ENCODE measurements at regions of chr1 and their contacts with region 1.

Region 1: GRCh38 chr1:101238681-101239094 is 1.9 kb downstream of the S1PR1 start:
- DNase-seq: peak; percentile 97
- H3K4me3 Mint-ChIP-seq: peak overlapping the region; percentile 99
- H3K27ac Mint-ChIP-seq: peak overlapping the region; percentile 99
- H3K4me1 Mint-ChIP-seq: peaks cover 44% of the 10 kb centered on the region
- H3K27me3 Mint-ChIP-seq: no peaks in the 10 kb centered on the region

Region 2: DNA sequence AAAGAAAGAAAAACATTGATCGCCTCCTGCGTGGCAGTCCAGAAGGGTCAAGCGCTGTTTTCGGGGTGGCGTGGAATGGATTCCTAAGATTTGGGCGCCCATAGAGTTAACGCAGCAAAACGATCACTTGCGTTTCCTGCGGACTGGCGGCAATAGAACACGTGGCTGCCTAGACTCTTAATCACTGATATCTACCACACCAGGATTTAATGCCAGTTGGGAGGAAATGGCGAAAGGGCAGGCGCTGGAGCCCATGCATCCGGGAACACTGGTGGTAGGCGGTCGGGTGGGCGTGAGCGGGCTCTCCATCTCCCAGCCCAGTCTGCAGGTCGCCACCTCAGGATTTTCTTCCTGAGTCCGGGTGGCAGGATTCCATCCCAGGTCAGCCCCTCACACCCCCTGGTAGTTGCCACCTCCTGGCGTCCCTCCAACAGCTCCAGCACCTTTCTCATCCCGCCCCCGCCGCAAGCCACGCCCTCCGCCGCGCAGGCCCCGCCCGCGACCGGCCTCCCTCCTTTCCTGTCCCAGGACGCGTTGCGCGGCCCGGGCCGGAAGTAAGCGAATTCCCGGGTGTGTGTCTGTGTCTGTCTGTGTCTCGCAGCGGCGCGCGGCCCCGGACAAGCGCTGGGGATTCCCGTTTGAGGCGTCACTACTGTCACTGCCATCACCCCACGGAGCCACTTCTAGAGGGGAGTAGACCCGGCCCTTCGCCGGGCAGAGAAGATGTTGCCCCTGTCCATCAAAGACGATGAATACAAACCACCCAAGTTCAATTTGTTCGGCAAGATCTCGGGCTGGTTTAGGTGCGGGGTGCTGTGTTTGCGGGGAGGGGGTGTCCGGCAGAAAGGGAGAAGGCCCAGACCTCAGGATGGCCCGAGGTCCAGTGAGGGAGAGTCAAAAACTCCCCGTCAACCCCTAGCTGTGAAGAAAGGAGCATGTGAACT is 342.9 kb before region 1 on chr1 and contains the start of gene SLC30A7:
- CTCF ChIA-PET with region 1: no interaction called
- intact Hi-C with region 1: loop called (anchors 1 kb)
- DNase-seq: peak; percentile 98
- H3K4me3 Mint-ChIP-seq: peak within 1 kb of the TSS; percentile 100
- H3K27ac Mint-ChIP-seq: peak within 1 kb of the TSS; percentile 100
- H3K4me1 Mint-ChIP-seq: peaks cover 37% of the 10 kb centered on the region
- H3K27me3 Mint-ChIP-seq: no peaks in the 10 kb centered on the region
- total RNA-seq, gene SLC30A7: 32.4 to 32.6 TPM

Region 3: GRCh38 chr1:100941098-100941527 is 297.6 kb before region 1 on chr1:
- CTCF ChIA-PET with region 1: no interaction called
- intact Hi-C with region 1: loop called (anchors 5 kb)
- DNase-seq: peak; percentile 58
- H3K4me3 Mint-ChIP-seq: peak overlapping the region; percentile 58
- H3K27ac Mint-ChIP-seq: peak overlapping the region; percentile 92
- H3K4me1 Mint-ChIP-seq: peaks cover 48% of the 10 kb centered on the region
- H3K27me3 Mint-ChIP-seq: peaks cover 2% of the 10 kb centered on the region

Region 4: DNA sequence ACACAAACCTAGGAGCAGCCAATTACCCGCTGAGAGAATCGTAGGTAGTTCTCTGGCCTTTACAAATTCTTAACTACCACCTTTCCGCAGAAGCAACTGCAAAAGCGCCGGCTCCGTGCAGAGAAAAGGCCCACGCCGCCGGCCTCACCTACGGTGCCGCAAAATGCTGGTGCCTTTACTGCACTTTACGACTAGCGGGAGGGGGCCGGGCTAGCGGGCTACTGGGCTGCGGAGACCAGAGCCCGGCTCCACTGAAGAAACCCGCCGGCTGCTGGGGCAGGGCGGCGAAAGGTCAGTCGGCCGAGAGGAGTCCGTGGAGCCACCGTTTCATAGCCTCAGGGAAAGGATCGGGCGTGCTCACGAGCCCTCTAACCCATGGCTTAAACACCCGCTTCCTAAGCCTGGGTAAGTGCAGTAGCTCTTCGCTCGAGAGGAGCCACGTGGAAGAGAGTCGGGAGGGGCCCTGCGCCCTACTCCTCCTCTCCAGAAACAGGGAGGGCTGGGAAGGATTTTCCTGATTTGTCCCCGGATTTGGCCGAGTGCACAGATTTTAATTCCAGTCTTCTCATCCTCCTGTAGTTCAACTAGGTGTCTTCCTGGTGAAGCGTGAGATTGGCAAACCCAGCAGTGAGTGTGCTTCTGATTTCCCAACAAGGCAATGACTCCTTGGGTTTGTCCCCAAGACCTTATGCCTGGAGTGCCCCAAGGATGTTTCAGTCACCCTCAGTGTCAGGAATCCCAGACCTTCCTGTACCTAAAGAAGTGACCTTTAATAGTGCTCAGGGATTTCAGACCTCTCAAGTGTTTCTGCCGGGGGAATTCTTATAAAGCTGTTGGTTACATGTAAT is 212.8 kb before region 1 on chr1 and contains the start of gene DPH5:
- CTCF ChIA-PET with region 1: interaction called, 6 read pairs
- intact Hi-C with region 1: loop called (anchors 1 kb)
- DNase-seq: peak; percentile 92
- H3K4me3 Mint-ChIP-seq: peak within 1 kb of the TSS; percentile 99
- H3K27ac Mint-ChIP-seq: peak within 1 kb of the TSS; percentile 98
- H3K4me1 Mint-ChIP-seq: peaks cover 58% of the 10 kb centered on the region
- H3K27me3 Mint-ChIP-seq: no peaks in the 10 kb centered on the region
- total RNA-seq, gene DPH5: 61.7 to 66.3 TPM

Region 5: GRCh38 chr1:101112051-101112780 is 126.5 kb before region 1 on chr1:
- CTCF ChIA-PET with region 1: interaction called, 5 read pairs
- intact Hi-C with region 1: loop called (anchors 1 kb)
- DNase-seq: peak; percentile 75
- H3K4me3 Mint-ChIP-seq: peak overlapping the region; percentile 54
- H3K27ac Mint-ChIP-seq: peak overlapping the region; percentile 88
- H3K4me1 Mint-ChIP-seq: peaks cover 56% of the 10 kb centered on the region
- H3K27me3 Mint-ChIP-seq: no peaks in the 10 kb centered on the region

Region 6: DNA sequence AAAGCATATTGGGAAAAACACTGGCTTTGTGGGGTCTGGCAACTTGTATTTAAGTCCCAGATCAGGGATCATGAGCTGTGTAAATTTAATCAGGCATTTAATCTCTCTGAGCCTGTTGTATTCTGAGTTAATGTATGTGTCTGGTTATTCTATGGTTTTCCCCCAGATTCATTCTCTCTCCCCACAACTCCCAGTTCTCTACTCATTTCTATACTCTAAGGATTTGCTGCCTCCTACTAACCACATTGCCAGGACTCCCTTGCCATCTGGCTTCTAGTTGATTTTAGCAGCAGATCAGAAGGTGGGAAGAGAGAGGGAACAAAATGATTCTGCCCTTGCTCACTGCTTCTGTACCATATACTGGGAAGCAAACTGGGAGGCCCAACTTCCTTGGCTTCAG is 33.2 kb before region 1 on chr1:
- CTCF ChIA-PET with region 1: interaction called, 5 read pairs
- intact Hi-C with region 1: loop called (anchors 1 kb)
- DNase-seq: no peak
- H3K4me3 Mint-ChIP-seq: no peak overlapping the region
- H3K27ac Mint-ChIP-seq: peak overlapping the region; percentile 57
- H3K4me1 Mint-ChIP-seq: peaks cover 17% of the 10 kb centered on the region
- H3K27me3 Mint-ChIP-seq: no peaks in the 10 kb centered on the region

Region 7: GRCh38 chr1:101379950-101380349 is 141.3 kb after region 1 on chr1:
- CTCF ChIA-PET with region 1: no interaction called
- intact Hi-C with region 1: no loop called
- DNase-seq: no peak
- H3K4me3 Mint-ChIP-seq: no peak overlapping the region
- H3K27ac Mint-ChIP-seq: no peak overlapping the region
- H3K4me1 Mint-ChIP-seq: peaks cover 7% of the 10 kb centered on the region
- H3K27me3 Mint-ChIP-seq: no peaks in the 10 kb centered on the region

Region 8: GRCh38 chr1:101474039-101474665 is 235.5 kb after region 1 on chr1:
- CTCF ChIA-PET with region 1: no interaction called
- intact Hi-C with region 1: no loop called
- DNase-seq: no peak
- H3K4me3 Mint-ChIP-seq: no peak overlapping the region
- H3K27ac Mint-ChIP-seq: no peak overlapping the region
- H3K4me1 Mint-ChIP-seq: no peaks in the 10 kb centered on the region
- H3K27me3 Mint-ChIP-seq: no peaks in the 10 kb centered on the region

Measured in activated naive CD4-positive, alpha-beta T cell treated with anti-CD3 and anti-CD28 coated beads for 36 hours (primary cell).